Activated CD4-positive, alpha-beta memory T cell treated with anti-CD3 and anti-CD28 coated beads, Interleukin-2, amount 10 ng/mL, durations not matched to agents 7 days and 5 days (primary cell): ENCODE measurements at regions of chr7 and their contacts with region 1.

Region 1: GRCh38 chr7:98021588-98022351 is 31.8 kb upstream of the OCM2 start:
- DNase-seq: peak; percentile 79
- H3K4me3 Mint-ChIP-seq: no peak overlapping the region
- H3K27ac Mint-ChIP-seq: no peak overlapping the region
- H3K4me1 Mint-ChIP-seq: peaks cover 5% of the 10 kb centered on the region
- H3K27me3 Mint-ChIP-seq: peaks cover 4% of the 10 kb centered on the region

Region 2: GRCh38 chr7:98038731-98039130 is 17.0 kb after region 1 on chr7:
- CTCF ChIA-PET with region 1: interaction called, 15 read pairs
- POLR2A ChIA-PET with region 1: no interaction called
- DNase-seq: no peak
- H3K4me3 Mint-ChIP-seq: no peak overlapping the region
- H3K27ac Mint-ChIP-seq: no peak overlapping the region
- H3K4me1 Mint-ChIP-seq: no peaks in the 10 kb centered on the region
- H3K27me3 Mint-ChIP-seq: peaks cover 5% of the 10 kb centered on the region

Region 3: DNA sequence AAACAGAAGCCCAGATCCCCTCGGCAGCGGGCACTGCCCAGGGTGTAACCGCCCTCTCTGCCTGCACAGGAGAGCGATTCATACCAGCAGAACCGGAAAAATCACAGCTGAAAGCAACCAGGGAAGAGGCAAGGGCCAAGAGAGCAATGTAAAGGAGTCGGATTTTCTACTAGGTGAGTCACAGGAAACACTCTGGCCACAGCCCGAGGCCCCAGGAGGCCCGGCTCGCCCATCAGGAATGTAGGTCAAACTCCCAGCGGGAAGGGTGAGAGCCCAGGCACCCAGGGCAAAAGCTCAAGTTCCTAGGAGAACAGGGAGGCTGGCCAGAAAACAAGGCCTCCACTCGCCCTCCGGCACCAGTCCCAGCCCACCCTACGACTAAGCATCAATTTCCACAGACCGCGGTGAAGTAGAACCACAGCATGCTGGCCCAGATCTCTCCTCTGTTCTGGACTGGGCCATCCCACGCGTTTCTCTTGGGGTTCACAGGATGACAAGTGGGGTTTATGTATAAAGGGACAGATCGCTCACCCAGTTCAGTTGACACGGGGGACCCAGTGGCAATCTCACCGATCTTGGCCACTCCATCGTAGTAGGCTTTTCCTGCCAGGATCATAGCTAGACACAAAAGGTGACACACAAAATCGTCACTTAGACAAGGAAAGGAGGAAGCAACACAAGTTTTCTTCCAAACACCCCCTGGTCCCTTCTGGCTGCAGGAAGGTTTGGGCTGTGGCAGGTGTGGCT is 332.9 kb after region 1 on chr7:
- CTCF ChIA-PET with region 1: no interaction called
- POLR2A ChIA-PET with region 1: no interaction called
- DNase-seq: no peak
- H3K4me3 Mint-ChIP-seq: no peak overlapping the region
- H3K27ac Mint-ChIP-seq: no peak overlapping the region
- H3K4me1 Mint-ChIP-seq: no peaks in the 10 kb centered on the region
- H3K27me3 Mint-ChIP-seq: no peaks in the 10 kb centered on the region